HCT116 (cell line): ENCODE measurements at regions of chr6 and their contacts with region 1.

Region 1: GRCh38 chr6:87929843-87930288 is 117.8 kb upstream of the SPACA1 start:
- DNase-seq: peak; percentile 71
- ATAC-seq: peak; percentile 100
- H3K4me3 ChIP-seq: no peak overlapping the region
- H3K27ac ChIP-seq: no peak overlapping the region
- H3K4me1 ChIP-seq: peaks cover 0 to 6% of the 10 kb centered on the region in 2 experiments; a peak in 1 of 4 replicates
- H3K27me3 ChIP-seq: peaks cover 8% of the 10 kb centered on the region; the same call in 1 of the 2 replicates
- CTCF ChIP-seq: peak; percentile 77 to 91 (median 85); a peak in 5 of 6 replicates
- POLR2A ChIP-seq: no peak
- RAD21 ChIP-seq: peak; percentile 92

Region 2: DNA sequence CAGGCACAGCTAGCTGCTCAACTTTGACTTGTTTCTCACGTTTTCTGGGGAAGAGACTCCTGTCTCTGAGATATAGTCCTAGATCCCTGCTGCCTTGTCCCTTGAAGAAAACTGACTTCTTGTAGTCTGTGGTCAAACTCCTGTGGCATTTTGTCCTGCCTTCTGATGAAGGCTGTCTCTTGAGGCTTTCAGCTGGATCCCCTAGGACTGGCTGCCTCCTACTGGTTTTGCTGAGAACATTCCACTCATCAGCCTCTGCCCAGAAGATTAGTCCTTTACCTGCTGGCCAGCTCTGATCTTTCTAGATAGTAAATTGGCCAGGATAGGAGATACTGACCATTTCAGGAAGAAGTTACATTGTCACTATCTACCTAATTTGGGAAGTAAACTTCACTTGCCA is 308.2 kb after region 1 on chr6:
- CTCF ChIA-PET with region 1: interaction called, 4 read pairs
- POLR2A ChIA-PET with region 1: no interaction called
- RAD21 ChIA-PET with region 1: no interaction called
- intact Hi-C with region 1: loop called (anchors 1 kb)
- DNase-seq: peak; percentile 13
- ATAC-seq: peak; percentile 67
- H3K4me3 ChIP-seq: no peak overlapping the region
- H3K27ac ChIP-seq: no peak overlapping the region
- H3K4me1 ChIP-seq: no peaks in the 10 kb centered on the region
- H3K27me3 ChIP-seq: no peaks in the 10 kb centered on the region
- CTCF ChIP-seq: peak; percentile 28 to 44 (median 40); a peak in 5 of 6 replicates
- POLR2A ChIP-seq: no peak
- RAD21 ChIP-seq: peak; percentile 62

Region 3: DNA sequence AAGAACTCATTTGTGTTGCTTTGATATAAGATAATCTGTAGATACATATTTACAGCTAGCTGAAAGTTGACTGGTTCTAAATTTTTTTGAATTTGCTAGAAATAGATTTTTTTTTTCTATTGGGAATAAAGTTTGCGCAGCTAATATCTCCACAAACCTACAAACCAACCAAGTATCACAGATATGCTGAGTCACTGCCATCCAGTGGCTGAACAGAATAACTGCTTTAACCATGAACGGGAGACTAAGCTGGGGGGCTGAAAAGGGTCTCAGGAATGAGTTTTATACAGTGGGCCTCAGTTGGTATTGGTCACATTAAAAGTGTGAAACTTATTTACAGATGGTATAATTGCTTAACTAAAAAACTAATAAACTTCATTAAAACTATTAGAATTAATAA is 563.0 kb after region 1 on chr6:
- CTCF ChIA-PET with region 1: interaction called, 19 read pairs
- POLR2A ChIA-PET with region 1: no interaction called
- RAD21 ChIA-PET with region 1: interaction called in 1 of 2 experiments, 4 read pairs
- intact Hi-C with region 1: loop called (anchors 1 kb)
- DNase-seq: peak; percentile 22
- ATAC-seq: peak; percentile 78
- H3K4me3 ChIP-seq: no peak overlapping the region
- H3K27ac ChIP-seq: no peak overlapping the region
- H3K4me1 ChIP-seq: no peaks in the 10 kb centered on the region
- H3K27me3 ChIP-seq: no peaks in the 10 kb centered on the region
- CTCF ChIP-seq: peak; percentile 43 to 64 (median 52); a peak in 5 of 6 replicates
- POLR2A ChIP-seq: no peak
- RAD21 ChIP-seq: peak; percentile 64

Region 4: DNA sequence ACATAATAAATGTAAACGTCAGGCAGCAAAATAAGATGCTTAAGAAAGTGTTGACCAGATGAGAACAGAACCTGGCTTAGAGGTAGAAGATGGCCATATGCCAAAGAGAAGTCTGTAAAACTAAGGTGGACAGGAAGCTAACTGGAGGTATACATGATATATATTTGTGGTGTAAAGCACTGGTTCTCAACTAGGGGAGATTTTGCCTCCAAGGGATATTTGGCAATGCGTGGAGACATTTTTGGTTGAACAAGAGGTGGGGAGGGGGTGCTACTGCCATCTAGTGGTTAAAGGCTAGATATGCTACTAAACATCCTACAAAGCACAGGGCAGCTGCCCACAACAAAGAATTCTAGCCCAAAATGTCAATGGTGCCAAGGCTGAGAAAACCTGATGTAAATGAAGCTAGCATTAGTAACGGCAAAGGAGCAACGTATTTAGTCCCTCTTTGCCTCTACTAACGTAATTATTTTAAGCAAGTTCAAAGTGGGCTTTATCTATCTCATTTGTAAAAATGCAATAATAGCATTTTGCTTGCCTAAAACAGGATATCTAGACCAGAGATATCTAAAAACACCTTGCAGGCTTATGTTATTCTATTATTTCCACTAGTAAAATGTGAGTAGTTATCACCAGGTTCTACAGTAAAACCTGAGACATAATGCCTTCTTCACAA is 851.0 kb after region 1 on chr6:
- CTCF ChIA-PET with region 1: no interaction called
- POLR2A ChIA-PET with region 1: no interaction called
- RAD21 ChIA-PET with region 1: no interaction called
- intact Hi-C with region 1: loop called (anchors 1 kb)
- DNase-seq: peak; percentile 28
- ATAC-seq: peak; percentile 87
- H3K4me3 ChIP-seq: no peak overlapping the region
- H3K27ac ChIP-seq: no peak overlapping the region
- H3K4me1 ChIP-seq: no peaks in the 10 kb centered on the region
- H3K27me3 ChIP-seq: no peaks in the 10 kb centered on the region
- CTCF ChIP-seq: peak; percentile 23 to 86 (median 83); a peak in 4 of 6 replicates
- POLR2A ChIP-seq: no peak
- RAD21 ChIP-seq: peak; percentile 65

Region 5: DNA sequence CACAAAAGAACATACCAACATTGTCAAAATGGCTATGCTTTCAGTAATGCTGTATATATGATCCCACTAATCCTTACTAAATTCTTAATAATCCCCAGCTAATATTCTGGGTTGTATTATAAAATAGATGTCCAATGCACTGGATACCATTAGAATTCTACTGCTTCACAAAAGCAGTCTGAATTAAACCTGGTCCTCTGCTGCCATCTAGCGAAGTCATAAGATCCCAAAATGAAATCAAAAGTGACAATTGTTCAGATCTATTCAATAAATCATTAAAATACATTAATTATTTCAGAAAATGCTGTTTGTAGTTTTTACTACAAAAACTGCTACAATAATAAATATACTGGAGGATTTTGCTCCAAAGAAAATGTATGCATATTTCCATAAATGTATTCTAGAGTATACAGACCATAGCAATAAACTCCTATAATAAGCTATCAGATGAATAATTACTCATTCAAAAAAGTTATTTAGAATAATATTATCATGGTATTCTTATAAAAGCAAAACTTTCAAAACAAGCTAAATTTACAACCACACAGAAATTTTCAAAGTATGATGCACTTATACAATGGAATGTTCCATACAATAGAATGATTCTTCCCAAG is 941.0 kb after region 1 on chr6:
- CTCF ChIA-PET with region 1: interaction called, 17 read pairs
- POLR2A ChIA-PET with region 1: no interaction called
- RAD21 ChIA-PET with region 1: no interaction called
- intact Hi-C with region 1: loop called (anchors 2 kb)
- DNase-seq: peak; percentile 29
- ATAC-seq: peak; percentile 54; the same call in 1 of the 2 replicates
- H3K4me3 ChIP-seq: no peak overlapping the region
- H3K27ac ChIP-seq: no peak overlapping the region
- H3K4me1 ChIP-seq: peaks cover 0 to 8% of the 10 kb centered on the region in 2 experiments; a peak in 2 of 4 replicates
- H3K27me3 ChIP-seq: no peaks in the 10 kb centered on the region
- CTCF ChIP-seq: peak; percentile 33 to 68 (median 43); a peak in 3 of 6 replicates
- POLR2A ChIP-seq: no peak
- RAD21 ChIP-seq: peak; percentile 74